ENCODE measurements at regions of chr1 and their contacts with region 1.

Region 1: GRCh38 chr1:1387098-1388077 is 11.7 kb downstream of the CCNL2 start:
- DNase-seq: no peak
- H3K4me3 ChIP-seq: no peak overlapping the region
- H3K27ac ChIP-seq: no peak overlapping the region
- H3K4me1 ChIP-seq: no peaks in the 10 kb centered on the region
- H3K27me3 ChIP-seq: no peaks in the 10 kb centered on the region
- CTCF ChIP-seq: no peak
- POLR2A ChIP-seq: no peak

Region 2: GRCh38 chr1:1281533-1282321 is 105.7 kb before region 1 on chr1:
- intact Hi-C with region 1: no loop called
- DNase-seq: no peak
- H3K4me3 ChIP-seq: no peak overlapping the region
- H3K27ac ChIP-seq: no peak overlapping the region
- H3K4me1 ChIP-seq: no peaks in the 10 kb centered on the region
- H3K27me3 ChIP-seq: no peaks in the 10 kb centered on the region
- CTCF ChIP-seq: no peak
- POLR2A ChIP-seq: no peak

Region 3: DNA sequence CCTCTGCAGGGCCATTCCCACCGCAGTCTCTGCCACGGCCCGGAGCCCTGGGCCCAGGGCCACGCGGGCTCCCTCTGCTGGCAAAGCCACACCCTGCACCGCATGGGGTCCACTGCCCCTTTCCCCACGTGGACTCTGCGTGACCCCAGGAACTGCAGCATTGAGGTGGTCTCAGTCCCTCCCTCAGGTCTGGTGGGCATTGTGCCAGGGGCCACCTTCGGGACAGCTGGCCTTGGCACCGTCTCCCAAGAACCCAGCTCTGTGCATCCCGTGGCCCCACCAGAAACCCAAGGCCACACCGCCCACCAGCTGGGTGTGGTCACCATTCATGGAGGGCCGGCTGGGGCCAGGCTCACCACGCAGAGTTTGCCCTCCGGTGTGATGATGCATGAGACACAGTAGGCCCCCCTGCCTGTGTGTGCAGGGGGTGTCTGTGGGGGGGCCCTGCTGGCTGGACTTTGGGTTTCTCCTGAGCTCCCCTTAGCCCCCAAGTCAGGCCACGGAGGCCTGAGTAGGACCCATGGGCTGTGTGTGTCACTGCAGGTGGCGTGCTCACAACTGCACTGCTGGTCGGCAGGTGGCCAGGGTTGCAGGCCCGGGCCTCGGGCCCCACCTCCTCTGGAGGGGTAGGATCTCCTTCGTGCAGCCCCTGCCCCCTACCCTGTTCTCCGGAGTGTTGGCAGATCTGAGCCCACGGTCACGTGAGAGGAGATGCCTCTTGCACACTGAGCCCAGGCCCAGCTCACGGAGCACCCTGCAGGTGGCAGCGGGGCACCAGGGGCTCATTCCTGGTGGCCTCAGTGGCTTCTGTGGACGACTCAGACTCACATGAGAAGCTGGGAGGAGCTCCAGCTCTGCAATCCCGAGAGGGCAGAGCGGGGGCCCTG is 53.9 kb after region 1 on chr1:
- intact Hi-C with region 1: no loop called
- DNase-seq: peak in 1 of 2 donors; percentile 55
- H3K4me3 ChIP-seq: no peak overlapping the region
- H3K27ac ChIP-seq: no peak overlapping the region
- H3K4me1 ChIP-seq: peaks cover 4 to 8% of the 10 kb centered on the region in 2 donors
- H3K27me3 ChIP-seq: no peaks in the 10 kb centered on the region
- CTCF ChIP-seq: peak; percentile 84 to 91 (median 86)
- POLR2A ChIP-seq: no peak

Region 4: GRCh38 chr1:1507305-1507704 is 119.9 kb after region 1 on chr1:
- intact Hi-C with region 1: loop called (anchors 10 kb)
- DNase-seq: no peak
- H3K4me3 ChIP-seq: no peak overlapping the region
- H3K27ac ChIP-seq: no peak overlapping the region
- H3K4me1 ChIP-seq: peaks cover 0 to 4% of the 10 kb centered on the region in 2 donors
- H3K27me3 ChIP-seq: no peaks in the 10 kb centered on the region
- CTCF ChIP-seq: no peak
- POLR2A ChIP-seq: no peak

Measured in uterus (tissue), 4 donors.